Cardiac septum (tissue), 1 donor: ENCODE measurements at regions of chr7 and their contacts with region 1.

Region 1: DNA sequence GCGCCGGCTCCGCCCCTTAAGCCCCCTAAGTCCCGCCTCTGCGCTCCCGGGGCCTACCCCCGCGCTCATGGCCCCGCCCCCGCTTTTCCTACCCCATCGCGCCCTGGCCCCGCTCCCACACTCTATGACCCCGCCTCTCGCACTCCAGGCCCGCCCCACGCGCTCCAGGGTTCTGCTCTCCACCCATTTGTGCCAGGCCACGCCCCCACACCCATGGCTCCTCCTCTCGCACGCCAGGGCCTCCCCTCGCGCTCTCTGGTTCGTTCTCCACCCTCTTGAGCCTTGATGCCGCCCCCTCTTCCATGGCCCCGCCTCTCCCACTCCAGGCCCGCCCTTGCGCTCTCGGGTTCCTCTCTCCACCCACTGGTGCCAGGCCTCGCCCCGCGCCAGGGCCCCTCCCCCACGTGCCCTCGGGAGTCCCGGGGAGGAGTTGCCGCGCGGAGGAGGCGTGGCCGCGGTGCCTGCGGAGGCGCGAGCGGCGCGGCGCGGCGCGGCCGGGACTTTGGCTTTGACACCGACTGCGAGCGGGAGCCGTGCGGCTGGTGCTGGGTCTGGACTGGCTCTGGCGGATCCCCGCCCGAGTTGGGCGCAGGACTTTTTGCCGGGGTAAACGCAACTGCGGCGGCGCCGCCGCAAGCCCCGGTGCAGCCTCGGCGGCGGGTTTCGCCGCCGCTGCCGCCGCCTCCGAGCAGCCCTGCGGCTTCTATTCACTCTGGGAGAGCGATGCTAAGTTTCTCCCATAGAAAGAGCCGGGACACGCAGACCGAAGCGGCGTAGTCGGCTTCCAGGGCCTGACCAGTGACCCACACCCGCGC is at the start of gene EEPD1:
- DNase-seq: peak; percentile 100
- total RNA-seq, gene EEPD1: 6.6 TPM

Region 2: DNA sequence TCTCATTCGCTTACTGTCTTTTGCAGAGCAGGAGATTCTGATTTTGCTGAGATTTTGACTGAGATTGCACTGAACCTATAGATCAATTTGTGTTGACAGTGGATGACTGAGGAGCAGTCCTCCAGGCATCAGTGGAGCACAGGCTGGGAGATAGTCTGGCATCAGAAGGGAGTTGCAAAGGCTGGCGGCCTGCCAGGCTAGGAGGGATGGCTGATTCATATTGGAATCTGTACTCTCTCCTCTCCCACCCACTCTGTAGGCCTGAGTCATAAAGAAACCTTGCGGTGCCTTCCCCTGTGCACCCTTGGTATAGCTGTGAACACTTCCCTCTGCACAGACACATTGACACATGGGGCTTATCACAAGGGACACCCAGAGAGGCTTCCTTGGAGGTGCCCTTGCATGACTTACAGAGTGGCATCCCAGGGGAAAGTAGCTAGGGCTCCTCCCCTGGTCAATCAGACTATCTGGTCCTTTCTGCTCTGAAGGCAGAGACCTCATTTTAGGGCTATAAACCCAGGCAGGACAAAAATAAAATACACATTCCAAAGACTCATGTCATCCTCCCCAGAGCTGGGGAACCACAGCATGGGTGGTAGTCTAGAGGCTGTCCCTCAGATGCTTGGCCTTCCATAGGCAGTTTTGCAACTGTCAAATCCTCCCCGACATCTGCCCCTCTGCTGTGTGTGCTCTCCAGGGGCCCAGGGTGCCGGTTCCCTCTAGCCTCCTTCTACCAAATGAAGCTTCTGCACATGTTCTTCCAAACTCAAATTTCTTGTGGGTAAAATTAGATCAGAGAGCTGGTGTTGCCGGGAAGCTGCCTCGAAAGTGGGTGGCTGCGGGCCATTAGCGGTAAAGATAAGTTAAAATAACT is 37.3 kb before region 1 on chr7:
- intact Hi-C with region 1: loop called (anchors 5 kb)
- DNase-seq: no peak

Region 3: DNA sequence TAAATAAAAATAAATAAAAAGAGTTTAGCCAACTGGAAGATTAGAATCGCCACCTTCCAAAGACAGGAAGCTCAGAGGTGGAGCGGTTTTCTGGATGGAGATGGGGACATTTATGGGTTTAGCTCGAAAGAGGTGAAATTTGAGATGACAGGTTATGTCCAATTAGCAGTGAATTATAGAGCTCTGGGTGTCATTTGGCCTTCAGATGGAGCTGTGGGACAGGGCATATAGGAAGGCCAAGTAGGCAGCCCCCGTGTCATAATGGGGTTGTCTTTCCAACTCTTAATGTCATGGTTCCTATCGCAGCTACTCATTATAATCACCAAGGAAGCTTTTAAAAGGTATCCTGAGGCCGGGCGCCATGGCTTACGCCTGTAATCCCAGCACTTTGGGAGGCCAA is 21.0 kb before region 1 on chr7:
- intact Hi-C with region 1: loop called (anchors 2 kb)
- DNase-seq: no peak

Region 4: DNA sequence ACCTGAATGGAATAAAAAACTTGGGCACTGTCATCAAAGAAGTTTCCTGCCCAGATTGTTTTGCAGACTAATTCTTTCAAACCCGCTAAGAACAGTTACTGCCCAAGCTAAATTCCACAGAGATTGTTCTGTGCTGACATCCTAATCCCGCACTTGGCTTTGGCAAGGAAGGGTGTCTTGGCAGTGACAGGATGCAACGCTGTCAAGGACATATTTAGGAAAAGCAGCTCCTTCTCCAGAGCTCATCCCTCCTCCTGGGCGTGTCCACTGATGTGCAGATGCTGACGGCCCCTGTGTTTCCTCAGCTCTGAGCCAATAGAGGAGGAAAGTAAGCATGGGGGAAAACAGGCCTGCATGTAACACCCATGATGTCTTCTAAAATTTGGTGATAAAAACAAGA is 74.3 kb after region 1 on chr7:
- intact Hi-C with region 1: no loop called
- DNase-seq: no peak